Endothelial cell of umbilical vein (primary cell): ENCODE measurements at regions of chr3 and their contacts with region 1.

Region 1: DNA sequence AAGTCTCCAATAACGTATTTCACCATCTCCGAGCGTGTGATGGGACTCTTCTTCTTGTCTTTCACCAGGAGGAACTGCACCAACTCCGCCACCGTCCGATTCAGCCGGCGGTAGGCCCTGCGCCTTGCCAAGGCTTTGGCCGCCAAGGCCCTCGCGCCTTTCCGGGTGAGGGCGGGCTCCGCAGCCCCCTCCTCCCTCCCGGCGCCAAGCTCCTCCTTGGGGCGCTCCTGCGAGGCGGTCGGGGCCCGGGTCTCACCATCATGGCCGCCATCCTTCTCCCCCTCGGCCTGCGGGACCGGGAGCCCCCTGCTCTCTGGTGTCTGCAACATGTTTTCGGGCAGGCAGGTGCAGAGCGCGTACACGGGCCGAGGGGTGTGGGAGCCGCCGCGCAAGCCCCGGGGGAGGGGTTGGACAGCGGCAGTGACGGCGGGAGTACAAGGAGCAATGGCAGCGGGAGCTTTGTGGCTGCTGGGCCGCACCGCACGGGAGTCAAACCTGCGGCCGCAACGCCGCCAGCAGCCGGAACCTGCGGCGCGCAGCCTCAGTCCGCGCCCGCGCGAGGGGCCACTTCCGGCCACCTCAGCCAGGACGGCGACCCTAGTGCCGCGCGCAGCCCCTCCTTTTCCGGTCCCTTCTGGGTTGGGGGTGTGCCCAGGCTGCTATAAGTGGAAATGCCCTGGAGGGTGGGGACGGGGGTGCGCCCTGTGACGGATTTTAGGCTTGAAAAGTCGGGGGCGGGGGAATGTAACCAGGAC is at the start of gene MAGEF1:
- DNase-seq: peak; percentile 57
- H3K4me3 ChIP-seq: peak within 1 kb of the TSS; percentile 25 to 73 (median 73)
- H3K27ac ChIP-seq: no peak within 1 kb of the TSS
- H3K4me1 ChIP-seq: peaks cover 10% of the 10 kb centered on the region
- H3K27me3 ChIP-seq: no peaks in the 10 kb centered on the region
- CTCF ChIP-seq: no peak
- POLR2A ChIP-seq: peak; percentile 28
- total RNA-seq, gene MAGEF1: 13.1 and 14.2 TPM in 2 replicates

Region 2: DNA sequence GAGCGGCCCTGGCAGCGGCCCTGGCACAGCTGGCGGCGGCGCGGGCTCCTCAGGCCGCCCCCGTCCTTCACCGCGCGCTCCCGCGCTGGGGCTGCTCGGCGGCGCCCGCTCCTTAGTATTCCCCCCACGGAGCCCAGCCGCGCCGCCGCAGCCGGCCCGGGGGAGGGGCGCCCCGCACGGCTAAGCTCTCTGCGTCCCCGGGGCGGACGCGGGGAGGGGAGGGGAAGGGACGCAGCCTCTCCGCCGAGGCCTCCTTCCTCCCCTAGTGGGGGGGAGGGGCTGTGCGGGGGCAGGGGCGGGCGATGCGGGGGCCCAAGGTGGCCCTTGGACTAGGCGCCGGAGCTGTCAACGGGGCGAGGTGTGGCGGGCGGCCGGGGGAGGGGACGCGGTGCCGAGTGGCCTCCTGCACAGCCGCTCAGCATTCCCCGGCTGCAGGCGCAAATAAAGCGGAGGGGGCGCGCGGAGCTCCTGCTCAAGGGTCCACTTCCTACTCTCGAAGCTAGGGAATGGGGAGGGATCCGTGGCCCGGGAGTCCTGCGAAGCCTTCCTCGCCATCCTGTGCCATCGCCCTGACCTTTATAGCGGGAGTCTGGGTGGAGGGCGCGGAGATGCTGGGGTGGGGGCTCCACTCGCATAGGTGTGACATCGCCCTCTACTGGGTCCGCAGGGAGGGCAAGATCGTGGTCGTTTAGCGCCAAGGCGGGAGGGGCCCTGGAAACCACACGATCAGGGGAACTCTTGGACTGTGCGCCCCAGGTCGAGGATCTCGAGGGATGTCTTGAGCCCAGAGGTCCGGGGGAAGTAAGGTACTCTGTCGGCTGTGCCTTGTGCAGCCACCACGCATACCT is 127.9 kb before region 1 on chr3:
- CTCF ChIA-PET with region 1: no interaction called
- POLR2A ChIA-PET with region 1: no interaction called
- dilution Hi-C with region 1: no loop called
- intact Hi-C with region 1: loop called (anchors 5 kb)
- DNase-seq: no peak
- H3K4me3 ChIP-seq: peak overlapping the region in 1 of 3 experiments; percentile 23
- H3K27ac ChIP-seq: no peak overlapping the region
- H3K4me1 ChIP-seq: peaks cover 5% of the 10 kb centered on the region
- H3K27me3 ChIP-seq: peaks cover 18 to 32% of the 10 kb centered on the region in 2 experiments
- CTCF ChIP-seq: peak; percentile 17 to 23
- POLR2A ChIP-seq: no peak

Region 3: GRCh38 chr3:184619369-184619768 is 92.3 kb before region 1 on chr3:
- CTCF ChIA-PET with region 1: no interaction called
- POLR2A ChIA-PET with region 1: no interaction called
- dilution Hi-C with region 1: no loop called
- intact Hi-C with region 1: loop called (anchors 1 kb)
- DNase-seq: peak; percentile 62
- H3K4me3 ChIP-seq: no peak overlapping the region
- H3K27ac ChIP-seq: peak overlapping the region; percentile 30
- H3K4me1 ChIP-seq: peaks cover 21% of the 10 kb centered on the region
- H3K27me3 ChIP-seq: peaks cover 0 to 3% of the 10 kb centered on the region in 2 experiments
- CTCF ChIP-seq: no peak
- POLR2A ChIP-seq: no peak

Region 4: GRCh38 chr3:185069037-185070030 is 357.7 kb after region 1 on chr3:
- CTCF ChIA-PET with region 1: no interaction called
- POLR2A ChIA-PET with region 1: no interaction called
- dilution Hi-C with region 1: no loop called
- intact Hi-C with region 1: no loop called
- DNase-seq: no peak
- H3K4me3 ChIP-seq: no peak overlapping the region
- H3K27ac ChIP-seq: no peak overlapping the region
- H3K4me1 ChIP-seq: no peaks in the 10 kb centered on the region
- H3K27me3 ChIP-seq: no peaks in the 10 kb centered on the region
- CTCF ChIP-seq: no peak
- POLR2A ChIP-seq: no peak